ENCODE measurements at regions of chr5 and their contacts with region 1.

Region 1: DNA sequence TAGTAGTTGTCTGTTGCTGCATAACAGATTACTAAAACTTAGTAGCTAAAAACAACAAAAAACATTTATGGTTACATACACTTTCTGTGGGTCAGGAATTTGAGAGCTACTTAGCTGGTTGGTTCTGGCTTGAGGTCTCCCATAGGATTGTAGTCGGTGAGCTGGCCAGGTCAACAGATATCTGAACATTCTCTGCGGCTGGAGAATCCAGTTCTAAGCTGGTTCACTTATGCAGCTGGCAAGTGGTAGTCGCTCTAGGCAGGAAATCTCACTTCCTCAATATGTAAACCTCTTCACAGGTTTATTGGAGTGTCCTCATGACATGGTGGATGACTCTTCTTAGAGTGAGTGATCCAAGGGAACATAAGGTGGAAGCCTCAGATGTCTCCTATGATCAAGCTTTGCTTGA is 65.7 kb upstream of the TNFAIP8 start:
- DNase-seq: no peak
- ATAC-seq: peak; percentile 51
- H3K4me3 Mint-ChIP-seq: peak overlapping the region; percentile 75
- H3K27ac Mint-ChIP-seq: peak overlapping the region; percentile 86
- H3K4me1 Mint-ChIP-seq: peaks cover 74% of the 10 kb centered on the region
- H3K27me3 Mint-ChIP-seq: no peaks in the 10 kb centered on the region

Region 2: GRCh38 chr5:119276978-119277377 is 13.2 kb before region 1 on chr5:
- POLR2A ChIA-PET with region 1: interaction called, 12 read pairs
- DNase-seq: no peak
- ATAC-seq: no peak
- H3K4me3 Mint-ChIP-seq: peak overlapping the region; percentile 69
- H3K27ac Mint-ChIP-seq: peak overlapping the region; percentile 84
- H3K4me1 Mint-ChIP-seq: peaks cover 85% of the 10 kb centered on the region
- H3K27me3 Mint-ChIP-seq: no peaks in the 10 kb centered on the region